Activated naive CD8-positive, alpha-beta T cell treated with anti-CD3 and anti-CD28 coated beads, Interleukin-2, amount 10 ng/mL, durations not matched to agents 7 days and 5 days (primary cell): ENCODE measurements at regions of chr15 and their contacts with region 1.

Region 1: GRCh38 chr15:77013776-77014131 is 18.8 kb downstream of the PSTPIP1 start:
- DNase-seq: peak; percentile 81
- ATAC-seq: peak; percentile 76
- H3K4me3 Mint-ChIP-seq: peak overlapping the region; percentile 88
- H3K27ac Mint-ChIP-seq: peak overlapping the region; percentile 96
- H3K4me1 Mint-ChIP-seq: peaks cover 78% of the 10 kb centered on the region
- H3K27me3 Mint-ChIP-seq: no peaks in the 10 kb centered on the region

Region 2: DNA sequence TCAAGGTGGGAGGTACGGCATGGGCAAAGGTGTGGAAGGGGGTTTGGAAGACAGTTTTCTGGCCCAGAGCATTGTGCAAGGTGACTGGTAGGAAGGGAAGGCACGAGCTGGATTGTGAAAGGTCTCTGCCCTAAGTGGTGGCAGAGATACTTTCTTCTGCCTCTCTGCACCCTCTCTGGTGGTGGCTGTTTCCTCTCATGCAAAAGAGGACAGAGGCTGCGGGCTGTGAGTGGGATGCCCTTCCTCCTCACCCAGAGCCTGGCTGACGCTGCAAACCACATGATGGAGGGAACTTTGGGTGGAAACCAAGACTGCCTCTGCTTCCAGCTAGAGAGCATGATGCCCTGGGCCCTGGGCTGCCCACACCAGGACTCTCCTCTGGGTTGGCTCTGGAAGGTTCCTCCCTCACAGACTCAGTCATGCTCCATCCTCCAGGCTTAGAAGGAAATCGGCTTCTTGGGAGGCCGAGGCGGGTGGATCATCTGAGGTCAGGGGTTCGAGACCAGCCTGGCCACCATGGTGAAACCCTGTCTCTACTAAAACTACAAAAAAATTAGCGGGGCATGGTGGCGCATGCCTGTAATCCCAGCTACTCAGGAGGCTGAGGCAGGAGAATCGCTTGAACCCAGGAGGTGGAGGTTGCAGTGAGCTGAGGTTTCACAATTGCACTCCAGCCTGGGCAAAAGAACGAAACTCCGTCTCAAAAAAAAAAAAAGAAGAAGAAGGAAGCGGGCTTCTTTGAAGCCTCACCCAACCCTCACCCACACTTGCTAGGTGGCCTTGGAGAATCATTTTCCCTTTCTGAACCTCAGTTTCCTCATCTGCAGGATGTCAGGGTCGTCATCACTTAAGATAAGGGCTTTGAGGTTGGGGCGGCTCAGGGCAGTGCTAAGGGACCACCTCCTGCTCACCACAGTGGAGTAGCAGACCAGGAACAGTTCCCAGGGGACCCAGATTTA is 10.5 kb before region 1 on chr15:
- POLR2A ChIA-PET with region 1: interaction called, 137 read pairs
- DNase-seq: peak; percentile 73
- ATAC-seq: peak; percentile 74
- H3K4me3 Mint-ChIP-seq: peak overlapping the region; percentile 81
- H3K27ac Mint-ChIP-seq: peak overlapping the region; percentile 90
- H3K4me1 Mint-ChIP-seq: peaks cover 71% of the 10 kb centered on the region
- H3K27me3 Mint-ChIP-seq: no peaks in the 10 kb centered on the region

Region 3: DNA sequence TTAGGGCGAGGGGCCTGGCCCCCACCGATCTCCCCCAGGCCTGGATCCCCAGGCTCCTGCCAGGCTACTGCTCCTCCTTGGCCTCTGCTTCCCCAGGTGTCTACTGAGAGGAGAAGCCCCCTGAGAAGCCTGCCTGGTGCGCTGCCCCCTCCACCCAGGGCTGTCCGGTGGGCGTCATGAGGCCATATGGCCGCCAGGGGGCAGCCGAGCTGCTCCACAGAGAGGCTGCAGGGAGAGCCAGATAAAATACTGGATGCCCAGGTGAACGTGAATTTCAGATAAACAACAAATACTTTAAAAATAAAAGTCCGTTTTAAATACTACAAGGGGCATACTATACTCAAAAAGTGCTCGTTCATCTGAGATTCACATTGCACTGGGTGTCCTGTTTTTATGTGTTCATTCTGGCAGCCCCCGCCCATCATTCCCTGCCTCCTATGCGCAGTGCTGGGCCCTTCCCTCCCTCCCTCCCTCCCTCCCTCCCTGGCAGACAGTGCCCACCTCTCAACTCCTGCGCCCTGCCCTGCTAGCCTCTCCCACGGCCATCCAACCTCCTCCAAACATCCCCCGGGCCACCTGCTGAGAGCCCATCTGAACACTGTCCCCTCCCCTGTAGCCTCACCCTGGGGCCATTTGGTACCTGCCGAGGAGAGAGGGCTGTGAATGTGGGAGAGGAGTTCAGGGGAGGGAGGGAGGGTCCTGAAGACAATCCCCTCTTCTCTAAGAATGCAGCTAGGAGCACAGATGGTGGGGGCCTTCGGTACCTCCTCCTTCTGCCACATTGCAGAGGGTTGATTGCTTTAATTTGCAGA is 10.7 kb after region 1 on chr15:
- POLR2A ChIA-PET with region 1: interaction called, 33 read pairs
- DNase-seq: peak; percentile 82
- ATAC-seq: no peak
- H3K4me3 Mint-ChIP-seq: peak overlapping the region; percentile 40
- H3K27ac Mint-ChIP-seq: peak overlapping the region; percentile 98
- H3K4me1 Mint-ChIP-seq: peaks cover 53% of the 10 kb centered on the region
- H3K27me3 Mint-ChIP-seq: no peaks in the 10 kb centered on the region